Calu3 (cell line): ENCODE measurements at regions of chr11 and their contacts with region 1.

Region 1: DNA sequence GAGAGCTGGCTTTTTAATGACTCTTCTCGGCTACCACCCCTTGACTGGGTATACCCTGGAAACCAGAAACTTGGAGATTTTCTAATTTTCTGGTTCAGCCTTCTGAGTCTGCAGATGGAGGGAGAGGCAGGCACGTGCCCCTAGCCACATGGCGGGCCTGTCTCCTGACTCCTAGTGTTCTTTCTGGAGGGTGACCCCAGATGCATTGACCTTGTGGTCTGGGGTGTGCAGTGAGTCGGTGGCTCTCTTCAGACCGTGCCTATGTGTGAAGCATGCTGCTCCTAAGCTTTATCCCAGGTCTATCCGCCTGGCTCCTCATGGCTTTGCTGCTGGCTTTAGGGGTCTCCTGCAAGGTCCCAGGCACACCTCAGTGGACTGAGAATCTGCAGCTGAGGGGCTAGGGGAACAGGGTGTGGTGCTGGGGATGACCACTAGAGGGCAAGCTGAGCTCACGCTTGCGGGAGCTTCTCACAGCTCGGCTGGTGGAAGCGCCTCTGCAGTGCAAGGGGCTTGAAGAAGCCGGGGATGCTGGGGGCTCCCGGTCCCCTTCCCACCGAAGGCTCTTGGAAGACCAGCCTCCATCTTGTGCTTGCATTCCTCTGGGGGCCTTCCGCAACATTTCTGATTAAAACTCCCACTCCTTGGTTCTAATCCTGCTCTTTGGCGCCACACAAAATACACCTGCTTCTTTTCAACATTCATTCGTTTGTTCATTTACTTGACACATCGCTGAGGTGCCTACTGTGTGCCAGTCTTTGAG is 51.8 kb downstream of the OTOG start:
- DNase-seq: peak; percentile 84
- H3K4me3 Mint-ChIP-seq: no peak overlapping the region
- H3K27ac Mint-ChIP-seq: no peak overlapping the region
- H3K4me1 Mint-ChIP-seq: peaks cover 8% of the 10 kb centered on the region
- H3K27me3 Mint-ChIP-seq: peaks cover 47% of the 10 kb centered on the region
- CTCF ChIP-seq: peak; percentile 97

Region 2: DNA sequence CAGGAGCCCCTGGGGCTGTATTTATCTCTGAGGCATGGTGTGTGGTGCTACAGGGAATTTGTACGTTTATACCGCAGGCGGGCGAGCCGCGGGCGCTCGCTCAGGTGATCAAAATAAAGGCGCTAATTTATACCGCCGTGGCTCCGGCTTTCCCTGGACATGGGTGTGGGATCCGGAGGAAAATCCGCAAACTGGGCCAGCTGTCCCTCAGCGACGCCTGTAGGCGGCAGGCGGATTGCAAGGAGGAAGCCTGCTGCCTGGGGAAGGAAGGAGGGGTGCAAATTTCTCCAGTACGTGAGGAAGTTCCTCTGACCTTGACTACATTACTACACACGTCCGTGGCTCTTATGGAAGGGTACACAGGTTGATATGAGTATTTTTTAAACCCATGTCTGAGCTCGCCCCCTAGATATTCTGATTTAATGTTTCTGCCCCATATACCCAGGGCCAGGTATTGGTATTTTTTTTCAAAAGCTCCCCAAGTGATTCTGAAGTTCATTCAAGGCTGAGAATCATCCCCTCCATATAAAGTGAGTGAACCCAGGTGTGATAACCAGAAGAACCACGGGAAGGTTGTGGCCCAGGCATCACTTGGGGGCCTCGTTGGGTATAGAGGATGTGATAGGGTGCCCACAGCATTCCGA is 123.2 kb after region 1 on chr11:
- CTCF ChIA-PET with region 1: interaction called, 11 read pairs
- intact Hi-C with region 1: no loop called
- DNase-seq: peak; percentile 53
- H3K4me3 Mint-ChIP-seq: no peak overlapping the region
- H3K27ac Mint-ChIP-seq: no peak overlapping the region
- H3K4me1 Mint-ChIP-seq: no peaks in the 10 kb centered on the region
- H3K27me3 Mint-ChIP-seq: peaks cover 56% of the 10 kb centered on the region
- CTCF ChIP-seq: no peak

Region 3: GRCh38 chr11:17978553-17979287 is 379.8 kb after region 1 on chr11:
- CTCF ChIA-PET with region 1: interaction called, 5 read pairs
- intact Hi-C with region 1: loop called (anchors 2 kb)
- DNase-seq: peak; percentile 69
- H3K4me3 Mint-ChIP-seq: no peak overlapping the region
- H3K27ac Mint-ChIP-seq: no peak overlapping the region
- H3K4me1 Mint-ChIP-seq: peaks cover 2% of the 10 kb centered on the region
- H3K27me3 Mint-ChIP-seq: no peaks in the 10 kb centered on the region
- CTCF ChIP-seq: peak; percentile 59

Region 4: GRCh38 chr11:18203723-18204122 is 604.8 kb after region 1 on chr11:
- CTCF ChIA-PET with region 1: no interaction called
- intact Hi-C with region 1: loop called (anchors 5 kb)
- DNase-seq: peak; percentile 4
- H3K4me3 Mint-ChIP-seq: no peak overlapping the region
- H3K27ac Mint-ChIP-seq: no peak overlapping the region
- H3K4me1 Mint-ChIP-seq: no peaks in the 10 kb centered on the region
- H3K27me3 Mint-ChIP-seq: peaks cover 13% of the 10 kb centered on the region
- CTCF ChIP-seq: peak; percentile 44